ENCODE measurements at regions of chr1 and their contacts with region 1.

Region 1: DNA sequence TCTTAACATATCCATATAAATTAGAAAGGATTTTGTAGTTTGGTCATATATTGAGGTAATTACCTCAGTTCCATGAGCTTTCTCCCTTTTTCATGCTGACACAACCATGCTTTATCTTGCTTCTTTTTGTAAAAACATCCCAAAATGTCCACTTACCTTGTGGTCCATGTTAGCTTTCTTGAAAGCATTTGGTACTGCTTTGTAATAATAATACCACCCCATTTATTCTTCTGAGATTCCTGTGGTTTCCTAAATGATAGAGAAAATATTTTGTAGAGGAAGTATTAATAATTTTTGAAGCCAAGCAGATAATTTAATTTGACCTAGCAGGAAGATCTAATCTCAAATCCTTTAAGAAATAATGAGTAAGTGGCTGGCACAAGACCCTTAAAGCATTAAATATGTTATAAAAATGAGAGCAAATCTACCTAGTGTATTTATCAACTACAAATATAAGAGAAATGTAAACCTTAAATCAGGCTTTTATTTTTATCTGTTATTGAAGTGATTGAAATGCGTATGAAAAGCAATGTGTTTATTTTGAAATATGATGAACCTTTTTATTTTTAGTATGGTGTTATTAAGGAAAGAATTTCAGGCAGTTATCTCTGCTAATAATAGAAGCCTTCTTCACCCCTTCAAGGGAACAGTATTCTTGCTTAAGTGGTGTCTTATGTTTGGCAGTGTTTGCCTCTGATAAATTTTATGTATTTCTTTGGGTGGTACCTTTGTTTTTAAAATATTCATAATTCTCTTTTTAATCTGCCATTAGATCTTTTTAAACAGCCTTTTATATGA is 9.2 kb downstream of the PRKAA2 start:
- DNase-seq: no peak
- ATAC-seq: no peak
- H3K4me3 ChIP-seq: no peak overlapping the region
- H3K27ac ChIP-seq: no peak overlapping the region
- H3K4me1 ChIP-seq: no peaks in the 10 kb centered on the region
- H3K27me3 ChIP-seq: no peaks in the 10 kb centered on the region
- CTCF ChIP-seq: no peak
- EP300 ChIP-seq: no peak
- POLR2A ChIP-seq: no peak
- RAD21 ChIP-seq: no peak

Region 2: GRCh38 chr1:56644064-56644918 is 10.0 kb before region 1 on chr1:
- CTCF ChIA-PET with region 1: no interaction called
- POLR2A ChIA-PET with region 1: no interaction called
- RAD21 ChIA-PET with region 1: no interaction called
- SMC1A ChIA-PET with region 1: no interaction called
- in situ Hi-C with region 1: no loop called
- intact Hi-C with region 1: no loop called
- DNase-seq: no peak
- ATAC-seq: no peak
- H3K4me3 ChIP-seq: no peak overlapping the region
- H3K27ac ChIP-seq: no peak overlapping the region
- H3K4me1 ChIP-seq: no peaks in the 10 kb centered on the region
- H3K27me3 ChIP-seq: peaks cover 8 to 18% of the 10 kb centered on the region in 2 experiments
- CTCF ChIP-seq: no peak
- EP300 ChIP-seq: no peak
- POLR2A ChIP-seq: no peak
- RAD21 ChIP-seq: no peak

Region 3: GRCh38 chr1:56726706-56727105 is 72.4 kb after region 1 on chr1:
- CTCF ChIA-PET with region 1: no interaction called
- POLR2A ChIA-PET with region 1: no interaction called
- RAD21 ChIA-PET with region 1: no interaction called
- SMC1A ChIA-PET with region 1: no interaction called
- in situ Hi-C with region 1: no loop called
- intact Hi-C with region 1: loop called (anchors 2 kb)
- DNase-seq: no peak
- ATAC-seq: no peak
- H3K4me3 ChIP-seq: no peak overlapping the region
- H3K27ac ChIP-seq: no peak overlapping the region
- H3K4me1 ChIP-seq: no peaks in the 10 kb centered on the region
- H3K27me3 ChIP-seq: no peaks in the 10 kb centered on the region
- CTCF ChIP-seq: no peak
- EP300 ChIP-seq: no peak
- POLR2A ChIP-seq: no peak
- RAD21 ChIP-seq: no peak

Region 4: DNA sequence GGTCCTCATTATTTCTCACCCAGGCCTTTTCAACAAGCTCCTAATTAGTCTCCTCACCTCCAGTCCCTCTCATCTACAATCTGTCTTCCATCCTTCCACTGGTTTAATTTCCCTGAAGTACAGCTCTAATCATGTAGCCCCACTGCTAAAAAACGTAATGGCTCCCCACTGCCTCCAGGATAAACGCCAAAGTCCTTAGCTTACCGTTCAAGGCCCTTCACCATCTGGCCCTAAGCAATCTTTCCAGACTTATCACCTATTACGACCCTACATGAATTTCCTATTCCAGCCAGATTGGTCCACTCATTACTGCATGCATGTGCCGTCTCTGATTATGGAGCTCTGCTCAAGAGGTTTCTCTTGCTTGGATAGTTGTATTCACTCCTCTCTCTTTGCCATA is 852.6 kb after region 1 on chr1:
- CTCF ChIA-PET with region 1: no interaction called
- POLR2A ChIA-PET with region 1: no interaction called
- RAD21 ChIA-PET with region 1: no interaction called
- SMC1A ChIA-PET with region 1: no interaction called
- in situ Hi-C with region 1: no loop called
- intact Hi-C with region 1: no loop called
- DNase-seq: no peak
- ATAC-seq: no peak
- H3K4me3 ChIP-seq: no peak overlapping the region
- H3K27ac ChIP-seq: no peak overlapping the region
- H3K4me1 ChIP-seq: no peaks in the 10 kb centered on the region
- H3K27me3 ChIP-seq: no peaks in the 10 kb centered on the region
- CTCF ChIP-seq: no peak
- EP300 ChIP-seq: no peak
- POLR2A ChIP-seq: no peak
- RAD21 ChIP-seq: no peak

Measured in GM12878 (cell line).